ENCODE measurements at regions of chr1 and their contacts with region 1.

Region 1: DNA sequence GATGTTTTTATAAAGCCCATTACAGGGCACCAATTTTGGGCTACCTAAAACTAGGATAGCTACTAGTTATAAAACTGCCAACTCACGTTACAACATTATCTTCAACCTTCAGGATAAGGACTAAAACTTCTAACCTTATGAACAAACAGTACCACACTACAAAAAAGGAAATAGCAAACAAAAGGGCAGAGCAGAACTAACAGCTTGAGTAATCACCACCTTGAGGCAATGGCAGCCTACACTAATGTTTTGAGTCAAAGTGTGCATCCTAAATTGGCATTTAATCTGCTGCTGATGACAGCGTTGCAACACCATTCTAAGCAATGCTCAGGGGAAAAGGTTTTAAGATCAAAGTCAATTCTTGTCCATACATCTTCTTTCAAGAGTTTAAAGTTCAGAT is 27.2 kb downstream of the PTP4A2 start:
- DNase-seq: peak; percentile 55
- ATAC-seq: peak; percentile 80
- H3K4me3 Mint-ChIP-seq: no peak overlapping the region
- H3K27ac Mint-ChIP-seq: peak overlapping the region; percentile 70
- H3K4me1 Mint-ChIP-seq: peaks cover 57% of the 10 kb centered on the region
- H3K27me3 Mint-ChIP-seq: no peaks in the 10 kb centered on the region

Region 2: DNA sequence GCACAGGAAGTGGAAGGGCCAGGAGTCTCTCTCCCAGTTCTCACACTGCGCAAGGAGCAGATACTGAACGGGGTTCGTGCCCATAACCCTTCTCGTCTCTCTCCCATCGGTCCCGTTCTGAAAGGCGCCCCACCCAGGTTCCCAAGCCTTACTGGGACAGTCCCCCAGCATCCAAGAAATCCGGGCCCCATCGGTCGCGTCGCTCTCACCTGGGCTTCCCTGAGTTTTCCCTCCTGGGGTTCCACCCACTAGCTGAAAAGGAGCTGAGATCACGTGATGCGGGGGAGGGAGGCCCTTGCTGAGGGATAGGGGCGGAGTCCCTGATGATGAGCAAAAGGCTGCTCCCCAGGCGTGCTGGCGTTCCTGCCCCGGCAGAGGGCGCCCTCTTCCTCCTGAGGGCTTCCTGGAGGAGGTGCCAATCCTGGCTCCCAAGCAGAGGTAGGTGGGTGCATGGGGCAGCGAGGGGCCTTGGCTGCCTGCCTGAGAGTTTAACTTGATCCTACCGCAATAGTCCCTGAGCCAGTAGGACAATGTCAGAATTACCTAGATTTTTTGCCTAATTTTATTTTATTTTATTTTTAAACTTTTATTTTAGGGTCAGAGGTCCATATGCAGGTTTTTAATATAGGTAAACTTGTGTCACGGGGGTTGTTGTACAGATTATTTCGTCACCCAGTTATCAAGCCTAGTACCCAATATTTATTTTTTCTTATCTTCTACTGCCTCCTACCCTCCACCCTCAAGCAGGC is 95.0 kb before region 1 on chr1 and contains the start of gene SPOCD1:
- CTCF ChIA-PET with region 1: interaction called, 9 read pairs
- POLR2A ChIA-PET with region 1: no interaction called
- intact Hi-C with region 1: loop called in 1 of 2 experiments (anchors 2 kb)
- DNase-seq: peak; percentile 94
- ATAC-seq: peak; percentile 93
- H3K4me3 Mint-ChIP-seq: no peak within 1 kb of the TSS
- H3K27ac Mint-ChIP-seq: peak within 1 kb of the TSS; percentile 17
- H3K4me1 Mint-ChIP-seq: peaks cover 9% of the 10 kb centered on the region
- H3K27me3 Mint-ChIP-seq: no peaks in the 10 kb centered on the region
- total RNA-seq, gene SPOCD1: 0.79 to 0.91 TPM

Region 3: DNA sequence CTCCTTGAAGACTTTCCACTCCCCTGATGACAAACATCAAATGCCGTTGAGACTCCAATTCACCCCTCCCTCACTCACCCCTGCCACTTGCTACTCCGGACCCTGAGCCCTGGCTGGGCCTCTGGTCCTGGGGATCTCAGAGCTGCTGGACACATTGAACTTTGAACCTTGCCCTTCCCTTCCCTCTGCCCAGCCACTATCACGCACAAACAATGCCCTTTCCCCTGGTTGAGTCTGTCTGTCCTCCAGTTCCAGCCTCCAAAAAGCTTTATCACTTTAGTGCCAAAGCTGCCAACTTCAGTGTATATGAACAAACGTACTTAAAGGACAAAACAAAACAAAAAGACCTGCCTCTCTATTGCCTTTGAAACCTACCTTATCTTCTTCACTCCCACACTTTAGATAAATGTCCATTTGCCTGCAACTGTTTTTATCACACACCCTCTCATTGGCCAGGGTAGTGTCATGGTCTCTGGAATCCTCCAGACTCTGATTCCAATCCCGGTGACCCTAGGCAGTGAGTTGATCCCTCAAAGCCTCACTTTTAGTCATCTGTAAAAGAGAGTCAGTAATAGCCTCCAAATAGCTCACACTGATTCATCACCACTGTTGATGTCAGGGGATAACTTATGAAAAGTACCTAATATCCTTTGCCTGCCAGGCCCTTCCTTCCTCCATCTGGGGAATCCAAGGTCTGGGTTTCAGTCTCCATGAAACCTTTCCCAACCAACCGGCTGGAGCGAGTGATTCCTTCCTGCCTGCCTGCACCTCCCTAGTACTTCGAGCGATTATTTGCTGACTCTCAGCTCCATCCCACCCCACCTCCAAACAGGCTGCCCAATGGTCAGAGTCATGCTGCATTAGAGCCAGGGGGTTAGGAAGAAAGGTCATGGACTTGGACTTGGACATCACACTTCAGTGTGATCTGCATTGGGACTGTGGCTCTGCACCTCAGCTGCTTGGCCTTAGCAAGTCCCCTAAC is 79.2 kb before region 1 on chr1:
- CTCF ChIA-PET with region 1: interaction called, 4 read pairs
- POLR2A ChIA-PET with region 1: no interaction called
- intact Hi-C with region 1: loop called in 1 of 2 experiments (anchors 5 kb)
- DNase-seq: no peak
- ATAC-seq: no peak
- H3K4me3 Mint-ChIP-seq: no peak overlapping the region
- H3K27ac Mint-ChIP-seq: no peak overlapping the region
- H3K4me1 Mint-ChIP-seq: peaks cover 20% of the 10 kb centered on the region
- H3K27me3 Mint-ChIP-seq: no peaks in the 10 kb centered on the region

Region 4: GRCh38 chr1:31923901-31924535 is 13.1 kb after region 1 on chr1:
- CTCF ChIA-PET with region 1: interaction called, 17 read pairs
- POLR2A ChIA-PET with region 1: interaction called, 4 read pairs
- intact Hi-C with region 1: loop called (anchors 1 kb)
- DNase-seq: no peak
- ATAC-seq: no peak
- H3K4me3 Mint-ChIP-seq: no peak overlapping the region
- H3K27ac Mint-ChIP-seq: peak overlapping the region; percentile 73
- H3K4me1 Mint-ChIP-seq: peaks cover 86% of the 10 kb centered on the region
- H3K27me3 Mint-ChIP-seq: no peaks in the 10 kb centered on the region

Region 5: GRCh38 chr1:31931593-31932225 is 20.8 kb after region 1 on chr1:
- CTCF ChIA-PET with region 1: interaction called, 9 read pairs
- POLR2A ChIA-PET with region 1: interaction called, 6 read pairs
- intact Hi-C with region 1: loop called (anchors 1 kb)
- DNase-seq: no peak
- ATAC-seq: peak; percentile 4
- H3K4me3 Mint-ChIP-seq: peak overlapping the region; percentile 91
- H3K27ac Mint-ChIP-seq: peak overlapping the region; percentile 91
- H3K4me1 Mint-ChIP-seq: peaks cover 90% of the 10 kb centered on the region
- H3K27me3 Mint-ChIP-seq: no peaks in the 10 kb centered on the region

Region 6: DNA sequence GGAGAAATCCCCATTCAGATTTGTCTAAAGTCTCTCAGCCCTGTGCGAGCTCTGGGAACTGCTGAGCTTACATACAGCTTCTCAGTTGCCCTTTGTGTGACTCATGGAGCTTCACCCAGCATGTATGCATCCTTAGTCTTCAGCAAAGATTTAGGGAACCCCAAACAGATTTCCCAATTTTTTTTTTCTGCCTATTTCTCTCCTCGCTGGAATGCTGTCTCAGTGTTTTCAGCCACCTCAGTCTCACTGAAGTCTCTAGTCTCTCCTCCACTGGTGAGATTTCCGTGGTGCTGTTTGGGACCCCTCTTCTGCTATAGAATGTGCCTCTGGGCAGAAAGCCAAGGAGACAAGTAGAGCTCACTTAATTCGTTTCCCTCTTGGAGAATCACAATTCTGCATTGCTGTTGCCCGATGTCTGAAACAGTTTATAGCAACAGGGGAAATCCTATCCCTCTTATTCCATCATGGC is 240.4 kb after region 1 on chr1:
- CTCF ChIA-PET with region 1: no interaction called
- POLR2A ChIA-PET with region 1: no interaction called
- intact Hi-C with region 1: no loop called
- DNase-seq: no peak
- ATAC-seq: no peak
- H3K4me3 Mint-ChIP-seq: no peak overlapping the region
- H3K27ac Mint-ChIP-seq: no peak overlapping the region
- H3K4me1 Mint-ChIP-seq: peaks cover 15% of the 10 kb centered on the region
- H3K27me3 Mint-ChIP-seq: no peaks in the 10 kb centered on the region

Region 7: GRCh38 chr1:32652244-32652962 is 741.5 kb after region 1 on chr1:
- CTCF ChIA-PET with region 1: no interaction called
- POLR2A ChIA-PET with region 1: no interaction called
- intact Hi-C with region 1: no loop called
- DNase-seq: no peak
- ATAC-seq: no peak
- H3K4me3 Mint-ChIP-seq: peak overlapping the region; percentile 90
- H3K27ac Mint-ChIP-seq: peak overlapping the region; percentile 99
- H3K4me1 Mint-ChIP-seq: peaks cover 57% of the 10 kb centered on the region
- H3K27me3 Mint-ChIP-seq: no peaks in the 10 kb centered on the region